ENCODE measurements at regions of chr7 and their contacts with region 1.

Region 1: GRCh38 chr7:91880413-91881241 is at the start of gene MTERF1:
- DNase-seq: peak; percentile 95
- ATAC-seq: peak; percentile 99
- total RNA-seq, gene MTERF1: 17.5 TPM

Region 2: DNA sequence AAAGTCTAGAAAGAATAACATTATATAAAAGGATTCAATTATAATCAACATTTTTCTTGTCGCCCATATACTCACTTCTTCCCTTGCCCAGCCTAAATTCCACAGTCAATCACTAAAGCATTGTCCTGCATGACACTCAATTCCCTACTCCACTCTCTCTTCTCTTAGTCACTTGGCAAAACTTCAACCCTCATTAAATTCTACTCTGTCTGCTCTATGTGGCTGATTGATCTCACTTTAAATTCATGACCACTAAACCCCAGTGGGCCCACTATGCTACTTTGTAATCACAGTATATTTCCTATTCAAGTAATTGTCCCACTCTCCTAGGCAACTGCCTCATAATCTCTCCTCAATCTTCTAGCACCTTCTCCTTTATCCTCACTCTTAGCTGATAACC is 54.2 kb before region 1 on chr7:
- intact Hi-C with region 1: loop called (anchors 2 kb)
- DNase-seq: no peak
- ATAC-seq: no peak

Region 3: DNA sequence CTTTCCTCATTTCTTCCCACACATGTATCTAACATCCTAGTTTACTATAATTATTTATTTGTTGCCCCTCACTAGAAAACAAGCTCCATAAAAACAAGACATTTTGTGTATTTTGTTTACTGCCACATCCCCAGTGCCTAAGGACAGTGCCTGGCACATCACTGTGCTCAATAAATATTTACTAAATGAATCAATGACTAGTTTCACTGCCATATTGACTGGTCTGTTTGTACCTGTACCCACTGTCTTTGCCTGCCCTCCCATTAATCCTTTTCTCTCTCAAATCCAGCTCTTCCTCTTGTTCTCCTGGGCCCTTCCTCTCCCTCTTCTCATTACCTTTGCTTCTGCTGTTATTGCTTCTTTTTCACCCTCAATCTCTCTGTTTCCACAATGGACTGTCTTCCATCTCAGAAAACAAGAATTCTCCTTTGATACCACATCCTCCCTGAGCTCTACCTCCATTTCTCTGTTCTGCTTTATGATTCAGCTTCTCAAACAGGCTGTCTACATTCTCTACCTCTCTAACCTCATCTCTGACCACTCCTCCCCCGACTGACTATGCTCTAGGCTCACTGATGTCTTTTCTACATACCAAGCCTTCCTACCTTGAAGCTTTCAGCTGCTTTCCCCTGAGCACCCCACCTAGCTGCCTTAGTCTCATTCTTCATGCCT is 717.8 kb after region 1 on chr7:
- intact Hi-C with region 1: no loop called
- DNase-seq: no peak
- ATAC-seq: no peak